Activated T-helper 1 cell treated with anti-CD3 and anti-CD28 coated beads, Interleukin-12 subunit alpha, Interleukin-12 subunit beta, Interleukin-2, Interleukin-4 antibody, amounts not matched to agents 30 ng/mL and 10 ng/mL and 1 ng/mL, durations not matched to agents 14 hours and 24 hours and 36 hours (primary cell): ENCODE measurements at regions of chr15 and their contacts with region 1.

Region 1: GRCh38 chr15:50145451-50145872 is 26.4 kb upstream of the ATP8B4 start:
- DNase-seq: no peak
- H3K4me3 Mint-ChIP-seq: no peak overlapping the region
- H3K27ac Mint-ChIP-seq: no peak overlapping the region
- H3K4me1 Mint-ChIP-seq: peaks cover 62% of the 10 kb centered on the region
- H3K27me3 Mint-ChIP-seq: no peaks in the 10 kb centered on the region

Region 2: DNA sequence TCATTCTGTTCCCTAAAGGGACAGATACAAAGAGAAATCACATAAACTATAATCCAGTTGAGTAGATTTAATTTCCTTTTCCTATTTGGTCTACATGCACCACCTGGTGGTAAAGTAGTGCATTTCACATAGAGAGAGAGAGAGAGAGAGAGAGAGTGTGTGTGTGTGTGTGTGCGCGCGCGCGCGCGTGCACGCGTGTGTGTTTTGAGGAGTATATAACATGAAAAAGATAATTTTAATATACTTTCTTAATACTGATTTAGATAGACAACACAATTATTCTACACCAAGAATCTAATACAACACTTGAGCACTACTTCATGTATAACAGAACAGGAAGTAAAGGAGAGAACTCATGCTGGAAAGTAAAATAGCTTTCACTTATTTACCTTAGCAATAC is 723.5 kb before region 1 on chr15:
- intact Hi-C with region 1: loop called (anchors 1 kb)
- DNase-seq: no peak
- H3K4me3 Mint-ChIP-seq: no peak overlapping the region
- H3K27ac Mint-ChIP-seq: peak overlapping the region; percentile 57
- H3K4me1 Mint-ChIP-seq: peaks cover 4% of the 10 kb centered on the region
- H3K27me3 Mint-ChIP-seq: peaks cover 6% of the 10 kb centered on the region

Region 3: DNA sequence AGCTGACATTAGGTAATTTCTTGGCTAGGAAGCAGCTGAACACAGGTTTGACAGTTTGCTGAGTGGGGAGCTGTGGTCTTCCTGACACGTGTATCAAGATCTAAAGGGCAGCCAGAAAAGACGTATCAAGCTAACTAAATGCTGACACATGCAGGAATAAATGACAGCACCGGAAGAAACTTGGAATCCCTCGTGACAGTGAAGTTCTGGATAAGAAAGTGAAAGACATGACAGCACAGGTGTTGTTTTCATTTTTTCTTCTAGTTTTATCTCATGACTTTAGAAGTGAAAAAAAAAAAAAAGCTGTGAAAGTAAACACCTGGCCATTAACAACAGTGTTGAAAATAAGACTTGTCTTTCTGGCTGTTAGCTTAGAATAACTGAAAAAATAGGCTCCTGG is 673.7 kb before region 1 on chr15:
- intact Hi-C with region 1: loop called (anchors 1 kb)
- DNase-seq: peak; percentile 8
- H3K4me3 Mint-ChIP-seq: no peak overlapping the region
- H3K27ac Mint-ChIP-seq: no peak overlapping the region
- H3K4me1 Mint-ChIP-seq: peaks cover 20% of the 10 kb centered on the region
- H3K27me3 Mint-ChIP-seq: peaks cover 4% of the 10 kb centered on the region

Region 4: DNA sequence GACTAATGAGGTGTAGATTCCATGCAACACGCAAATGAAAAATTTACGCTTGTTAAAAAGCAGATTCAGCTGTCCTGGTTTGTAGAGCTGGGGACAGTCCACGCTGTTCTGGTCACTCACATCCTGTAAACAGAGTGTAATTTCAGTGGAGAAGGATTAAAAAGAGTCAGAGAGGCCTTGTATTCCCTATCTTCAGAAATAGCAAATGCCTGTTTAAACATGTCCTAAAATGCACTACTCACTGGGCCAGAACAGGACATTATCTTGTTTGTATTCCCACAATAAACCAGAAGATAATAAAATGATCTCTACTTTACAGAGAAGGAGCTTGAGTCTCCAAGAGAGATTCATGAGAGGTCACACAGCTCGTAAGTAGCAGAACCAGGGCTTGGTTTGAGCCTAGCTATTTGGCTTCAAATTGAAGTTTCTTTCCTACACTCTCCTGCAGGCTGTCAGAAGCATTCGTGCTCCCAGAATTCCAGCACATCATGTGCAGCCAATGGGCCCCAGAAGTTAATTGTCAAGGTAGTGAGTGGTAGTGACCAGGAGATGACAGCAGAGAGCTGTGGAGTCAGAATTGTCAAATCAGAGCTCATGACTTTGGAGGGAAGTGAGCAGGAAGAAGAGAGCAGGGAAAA is 268.9 kb before region 1 on chr15:
- intact Hi-C with region 1: loop called (anchors 10 kb)
- DNase-seq: no peak
- H3K4me3 Mint-ChIP-seq: no peak overlapping the region
- H3K27ac Mint-ChIP-seq: peak overlapping the region; percentile 22
- H3K4me1 Mint-ChIP-seq: peaks cover 17% of the 10 kb centered on the region
- H3K27me3 Mint-ChIP-seq: no peaks in the 10 kb centered on the region

Region 5: GRCh38 chr15:50315814-50316630 is 170.6 kb after region 1 on chr15:
- intact Hi-C with region 1: loop called (anchors 1 kb)
- DNase-seq: no peak
- H3K4me3 Mint-ChIP-seq: no peak overlapping the region
- H3K27ac Mint-ChIP-seq: no peak overlapping the region
- H3K4me1 Mint-ChIP-seq: peaks cover 44% of the 10 kb centered on the region
- H3K27me3 Mint-ChIP-seq: no peaks in the 10 kb centered on the region